MCF 10A (cell line): ENCODE measurements at regions of chr14 and their contacts with region 1.

Region 1: GRCh38 chr14:45118594-45118993 is 15.7 kb downstream of the FKBP3 start:
- DNase-seq: no peak
- H3K4me3 Mint-ChIP-seq: no peak overlapping the region
- H3K27ac Mint-ChIP-seq: no peak overlapping the region
- H3K4me1 Mint-ChIP-seq: no peaks in the 10 kb centered on the region
- H3K27me3 Mint-ChIP-seq: no peaks in the 10 kb centered on the region
- CTCF ChIP-seq: no peak

Region 2: DNA sequence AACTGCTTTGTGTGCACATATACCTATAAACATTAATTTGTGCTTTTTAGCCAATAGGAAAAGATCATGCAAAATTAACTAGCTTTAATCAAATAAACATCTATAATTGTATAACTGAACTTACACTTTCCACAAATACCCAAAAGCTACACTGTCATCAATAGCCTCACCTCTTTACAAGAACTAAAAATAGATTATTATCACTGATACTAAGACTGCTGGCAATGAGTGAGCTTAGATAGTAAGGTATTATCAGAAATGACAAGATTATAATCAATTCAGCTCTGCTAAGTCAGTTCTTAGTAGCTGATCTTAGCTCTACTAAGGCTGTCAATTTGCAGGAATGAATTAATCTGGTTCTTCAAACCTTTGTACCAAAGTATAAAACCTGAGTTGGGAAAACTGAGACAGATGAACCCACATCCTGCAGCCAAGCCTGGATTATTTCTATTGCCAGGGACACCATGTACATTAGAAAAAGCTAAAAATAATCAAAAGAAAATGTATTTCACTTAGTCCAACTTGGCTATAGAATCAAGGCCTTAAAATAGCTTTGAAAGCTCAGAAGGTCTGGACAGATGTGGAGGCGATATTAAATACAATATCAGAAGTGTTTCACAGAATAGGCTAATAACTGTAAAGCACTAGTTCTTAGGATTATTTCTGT is 10.5 kb after region 1 on chr14:
- CTCF ChIA-PET with region 1: interaction called, 4 read pairs
- POLR2A ChIA-PET with region 1: interaction called, 22 read pairs
- intact Hi-C with region 1: no loop called
- DNase-seq: no peak
- H3K4me3 Mint-ChIP-seq: no peak overlapping the region
- H3K27ac Mint-ChIP-seq: no peak overlapping the region
- H3K4me1 Mint-ChIP-seq: no peaks in the 10 kb centered on the region
- H3K27me3 Mint-ChIP-seq: no peaks in the 10 kb centered on the region
- CTCF ChIP-seq: no peak